Psoas muscle (tissue), 8 donors: ENCODE measurements at regions of chr18 and their contacts with region 1.

Region 1: GRCh38 chr18:74731097-74731496 is 133.4 kb downstream of the ZNF407 start:
- DNase-seq: no peak
- ATAC-seq: no peak
- H3K4me3 ChIP-seq: no peak overlapping the region
- H3K27ac ChIP-seq: no peak overlapping the region
- H3K4me1 ChIP-seq: no peaks in the 10 kb centered on the region
- H3K27me3 ChIP-seq: no peaks in the 10 kb centered on the region
- CTCF ChIP-seq: no peak

Region 2: DNA sequence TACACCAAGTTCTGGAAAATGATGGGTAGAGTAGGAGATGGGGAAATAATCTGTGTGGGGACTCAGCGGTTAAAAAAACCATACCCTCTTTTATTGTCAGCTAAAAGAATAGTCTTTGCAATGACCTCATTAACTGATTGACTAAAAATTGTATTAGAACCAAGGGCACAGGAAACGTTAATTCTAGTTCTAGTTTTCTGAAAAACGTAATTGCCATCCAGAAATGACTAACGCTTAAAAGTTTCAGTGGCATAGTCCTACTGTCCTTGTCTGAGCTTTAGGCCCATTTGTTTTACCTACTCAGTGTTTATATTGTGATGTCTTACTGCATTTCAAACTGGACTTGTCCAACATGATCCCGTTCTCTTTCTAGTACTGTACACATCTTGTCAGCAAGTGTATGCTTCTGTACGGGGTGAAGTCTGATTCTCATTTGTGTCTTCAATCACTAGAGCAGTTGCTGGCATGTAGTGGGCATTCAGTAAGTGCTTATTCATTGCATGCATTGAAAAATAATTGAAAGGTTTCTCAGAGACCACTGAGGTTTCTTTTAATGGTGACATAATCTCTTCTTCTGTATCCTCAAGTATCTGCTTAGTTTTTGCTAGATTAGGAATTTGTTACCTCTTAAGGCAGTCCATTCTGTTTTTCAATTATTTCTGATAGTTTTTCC is 52.0 kb before region 1 on chr18:
- intact Hi-C with region 1: loop called in 1 of 2 experiments (anchors 10 kb)
- DNase-seq: no peak
- ATAC-seq: no peak
- H3K4me3 ChIP-seq: no peak overlapping the region
- H3K27ac ChIP-seq: no peak overlapping the region
- H3K4me1 ChIP-seq: no peaks in the 10 kb centered on the region
- H3K27me3 ChIP-seq: no peaks in the 10 kb centered on the region
- CTCF ChIP-seq: no peak